Upper lobe of right lung (tissue), 1 donor: ENCODE measurements at regions of chr5 and their contacts with region 1.

Region 1: DNA sequence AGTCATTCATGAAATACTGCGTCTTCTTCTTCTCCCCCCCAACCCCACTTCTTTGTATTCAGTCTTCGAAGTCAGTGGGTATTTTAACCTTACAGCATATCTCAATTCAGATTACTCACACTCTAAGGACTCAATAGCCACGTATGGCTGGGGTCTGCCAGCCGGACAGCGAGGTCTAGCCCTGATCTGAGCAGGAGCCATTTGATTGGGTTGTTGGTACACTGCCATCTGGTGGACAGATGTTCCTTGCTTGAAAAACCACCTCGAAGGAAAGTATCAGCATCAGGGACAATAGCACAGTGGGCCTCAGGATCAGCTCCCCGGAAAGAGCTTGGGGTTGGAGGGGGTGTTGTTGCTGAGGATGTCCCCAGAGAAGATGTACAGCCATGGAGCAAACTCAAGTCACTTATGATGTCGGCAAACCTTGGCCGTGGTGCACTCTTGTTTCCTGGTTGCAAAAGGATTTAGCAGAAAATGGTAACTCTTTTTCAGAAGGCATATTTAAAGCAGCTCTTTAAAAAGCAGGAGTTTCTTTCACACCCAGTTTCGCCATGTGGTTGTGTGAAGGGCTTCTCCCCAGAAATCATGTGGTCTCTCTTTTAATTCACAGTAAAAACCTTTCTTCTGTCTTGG is 31.7 kb upstream of the KCNMB1 start:
- DNase-seq: no peak
- ATAC-seq: peak; percentile 86
- H3K4me3 ChIP-seq: no peak overlapping the region
- H3K27ac ChIP-seq: no peak overlapping the region
- H3K4me1 ChIP-seq: no peaks in the 10 kb centered on the region
- H3K27me3 ChIP-seq: no peaks in the 10 kb centered on the region
- CTCF ChIP-seq: peak; percentile 78

Region 2: GRCh38 chr5:170225326-170226128 is 195.4 kb before region 1 on chr5:
- intact Hi-C with region 1: loop called (anchors 10 kb)
- DNase-seq: no peak
- ATAC-seq: peak; percentile 88
- H3K4me3 ChIP-seq: no peak overlapping the region
- H3K27ac ChIP-seq: no peak overlapping the region
- H3K4me1 ChIP-seq: peaks cover 11% of the 10 kb centered on the region
- H3K27me3 ChIP-seq: no peaks in the 10 kb centered on the region
- CTCF ChIP-seq: peak; percentile 73